ENCODE measurements at regions of chr12 and their contacts with region 1.

Region 1: GRCh38 chr12:93569656-93570551 is 2.6 kb upstream of the SOCS2 start:
- DNase-seq: peak; percentile 79 to 91 (median 90)
- H3K4me3 ChIP-seq: peak overlapping the region; percentile 91
- H3K27ac ChIP-seq: peak overlapping the region; percentile 87 to 89
- H3K4me1 ChIP-seq: peaks cover 2% of the 10 kb centered on the region
- H3K27me3 ChIP-seq: no peaks in the 10 kb centered on the region
- CTCF ChIP-seq: peak; percentile 58 to 88 (median 67)
- EP300 ChIP-seq: no peak
- POLR2A ChIP-seq: no peak

Region 2: DNA sequence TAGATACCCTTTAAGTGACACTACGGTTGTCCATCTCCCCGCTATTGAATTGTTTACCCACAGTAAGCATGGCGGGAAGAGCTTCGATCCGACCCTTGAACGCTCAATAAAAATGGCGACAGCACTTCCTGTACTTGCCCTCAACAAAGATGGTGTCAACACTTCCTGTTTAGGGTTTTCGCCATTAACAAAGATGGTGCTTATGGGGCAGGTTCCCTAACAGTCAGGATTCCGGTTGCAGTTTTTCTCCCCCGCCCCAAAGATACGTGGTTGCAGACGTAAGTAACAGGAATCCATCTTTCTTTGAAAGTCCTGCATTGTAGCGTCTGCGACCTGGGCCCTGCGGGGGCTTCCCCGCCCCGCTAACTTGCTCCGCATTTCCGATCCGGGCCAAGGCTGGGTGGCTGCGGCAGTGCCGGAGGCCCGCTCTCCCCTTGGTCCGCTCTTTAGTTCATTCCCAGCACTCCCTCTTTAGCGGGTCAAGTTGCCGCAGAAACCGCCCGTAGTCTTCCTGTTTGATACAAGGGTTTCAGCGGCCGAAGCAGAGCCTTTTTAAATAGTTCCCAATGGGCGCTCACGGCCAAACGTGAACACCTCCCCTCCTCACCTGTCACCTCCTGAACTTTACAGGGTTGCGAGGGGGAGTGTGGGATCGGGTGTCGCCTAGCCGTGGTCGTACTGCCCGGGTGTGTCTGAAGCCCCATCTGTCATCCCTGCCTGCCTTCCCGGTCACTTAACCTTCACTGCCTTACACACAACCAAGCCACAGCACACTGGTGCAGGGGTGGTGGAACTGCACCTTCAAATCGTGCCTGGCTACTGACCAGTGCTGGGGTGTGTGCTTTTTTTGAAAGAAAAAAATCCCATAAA is 107.5 kb after region 1 on chr12 and contains the start of gene CRADD:
- intact Hi-C with region 1: loop called in 2 of 4 experiments (anchors 5 to 10 kb)
- DNase-seq: peak; percentile 78 to 87 (median 83)
- H3K4me3 ChIP-seq: peak within 1 kb of the TSS; percentile 91
- H3K27ac ChIP-seq: peak within 1 kb of the TSS; percentile 86 to 95
- H3K4me1 ChIP-seq: peaks cover 6% of the 10 kb centered on the region
- H3K27me3 ChIP-seq: no peaks in the 10 kb centered on the region
- CTCF ChIP-seq: no peak
- EP300 ChIP-seq: peak; percentile 16
- POLR2A ChIP-seq: peak; percentile 70
- total RNA-seq, gene CRADD: 11.4 to 67.8 (median 16.9) TPM

Region 3: DNA sequence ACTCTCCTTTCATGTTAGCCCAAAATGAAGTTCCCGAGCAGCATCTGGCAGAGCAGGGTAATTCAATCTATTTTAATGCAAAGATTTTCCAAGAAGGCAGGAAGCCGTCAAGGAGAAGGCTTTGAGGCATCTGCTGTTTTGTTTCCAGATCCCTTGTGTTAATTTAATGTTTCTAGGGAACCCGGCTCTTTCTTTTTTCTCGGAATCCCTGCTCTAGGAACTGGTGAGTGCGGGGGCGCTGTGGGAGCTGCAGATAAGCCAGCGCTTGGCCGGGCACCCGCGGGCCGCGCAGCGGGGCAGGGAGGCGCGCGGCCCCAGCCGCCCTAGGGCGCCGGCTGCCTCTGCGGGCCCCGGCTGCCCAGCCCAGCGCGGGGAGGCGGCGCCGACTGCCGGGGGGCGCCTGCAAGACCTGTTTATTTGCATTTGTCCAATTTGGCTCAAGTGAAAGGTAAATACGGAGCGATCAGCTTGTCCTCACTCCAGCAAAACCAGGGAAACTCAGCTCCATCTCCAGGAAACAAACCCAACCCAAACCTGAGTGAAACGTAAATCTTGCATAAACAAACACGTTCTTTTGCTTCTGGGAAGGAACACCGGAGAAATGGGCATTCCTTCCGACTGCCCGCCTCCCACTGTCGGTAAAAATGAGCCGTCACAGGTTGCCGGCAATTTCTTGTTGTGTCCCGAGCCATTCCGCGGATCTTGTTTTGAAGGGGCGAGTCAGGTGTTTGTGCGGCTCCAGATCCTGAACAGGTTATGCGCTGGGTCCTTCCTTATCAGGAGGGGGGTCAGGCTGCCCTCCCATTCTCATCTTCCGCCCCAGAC is 172.4 kb after region 1 on chr12:
- intact Hi-C with region 1: loop called in 3 of 4 experiments (anchors 1 to 5 kb)
- DNase-seq: peak; percentile 76 to 87 (median 82)
- H3K4me3 ChIP-seq: peak overlapping the region; percentile 49
- H3K27ac ChIP-seq: peak overlapping the region; percentile 57 to 77
- H3K4me1 ChIP-seq: peaks cover 5% of the 10 kb centered on the region
- H3K27me3 ChIP-seq: no peaks in the 10 kb centered on the region
- CTCF ChIP-seq: peak in 2 of 3 donors; percentile 25 to 39
- EP300 ChIP-seq: peak; percentile 46
- POLR2A ChIP-seq: no peak

Region 4: GRCh38 chr12:94074980-94075928 is 505.4 kb after region 1 on chr12:
- intact Hi-C with region 1: loop called in 1 of 4 experiments (anchors 10 kb)
- DNase-seq: peak; percentile 29 to 75 (median 48)
- H3K4me3 ChIP-seq: no peak overlapping the region
- H3K27ac ChIP-seq: no peak overlapping the region
- H3K4me1 ChIP-seq: peaks cover 8% of the 10 kb centered on the region
- H3K27me3 ChIP-seq: no peaks in the 10 kb centered on the region
- CTCF ChIP-seq: peak; percentile 28 to 33 (median 30)
- EP300 ChIP-seq: no peak
- POLR2A ChIP-seq: no peak

Measured in ovary (tissue), 10 donors.